Naive thymus-derived CD4-positive, alpha-beta T cell (primary cell): ENCODE measurements at regions of chr10 and their contacts with region 1.

Region 1: GRCh38 chr10:97445722-97446639 is at the starts of genes EXOSC1 and ZDHHC16:
- DNase-seq: peak; percentile 67 to 93 (median 89)
- ATAC-seq: peak; percentile 99
- H3K4me3 ChIP-seq: peak within 1 kb of the TSS; percentile 98
- H3K4me3 Mint-ChIP-seq: peak within 1 kb of the TSS; percentile 89 to 99 (median 98)
- H3K27ac ChIP-seq: peak within 1 kb of the TSS; percentile 80
- H3K27ac Mint-ChIP-seq: peak within 1 kb of the TSS; percentile 86 to 97 (median 93)
- H3K4me1 ChIP-seq: peaks cover 19 to 29% of the 10 kb centered on the region in 2 donors
- H3K4me1 Mint-ChIP-seq: peaks cover 32 to 69% (median 44%) of the 10 kb centered on the region in 7 donors
- H3K27me3 ChIP-seq: no peaks in the 10 kb centered on the region
- H3K27me3 Mint-ChIP-seq: no peaks in the 10 kb centered on the region
- total RNA-seq, gene EXOSC1: 32.6 to 65.4 (median 53.2) TPM
- total RNA-seq, gene ZDHHC16: 13.2 to 38.8 (median 26.8) TPM

Region 2: DNA sequence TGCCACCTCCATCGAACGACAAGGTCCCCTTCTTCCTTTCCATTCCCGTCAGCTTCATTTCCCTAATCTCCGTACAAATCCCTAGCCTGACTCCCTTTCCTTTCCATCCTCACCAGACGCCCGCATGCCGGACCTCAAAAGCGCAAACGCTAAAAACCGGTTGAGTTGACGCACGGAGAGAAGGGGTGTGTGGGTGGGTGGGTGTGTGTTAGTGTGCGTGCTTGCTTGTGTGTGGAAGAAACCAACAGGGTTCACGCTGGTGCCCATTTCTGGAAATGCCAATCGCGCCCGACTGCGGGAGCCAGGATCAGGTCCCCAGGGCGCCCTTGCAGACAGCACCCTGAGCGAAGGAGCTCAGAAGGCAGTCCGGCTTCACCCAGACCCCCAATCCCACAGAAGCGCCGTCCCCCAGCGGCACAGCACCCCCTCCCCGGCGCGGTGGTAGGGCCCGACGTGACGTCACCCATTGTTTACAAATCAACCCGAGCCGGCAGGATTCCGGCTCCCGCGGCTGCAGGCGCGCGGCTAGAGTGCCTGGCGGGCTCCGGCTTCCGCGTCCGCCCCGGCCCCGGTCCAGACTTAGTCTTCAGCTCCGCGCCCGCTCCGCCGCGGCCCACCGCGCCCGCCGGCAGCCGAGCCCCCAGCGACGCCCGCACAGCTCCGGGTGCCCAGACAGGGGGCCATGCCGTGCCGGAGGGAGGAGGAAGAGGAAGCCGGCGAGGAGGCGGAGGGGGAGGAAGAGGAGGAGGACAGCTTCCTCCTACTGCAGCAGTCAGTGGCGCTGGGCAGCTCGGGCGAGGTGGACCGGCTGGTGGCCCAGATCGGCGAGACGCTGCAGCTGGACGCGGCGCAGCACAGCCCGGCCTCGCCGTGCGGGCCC is 127.0 kb before region 1 on chr10 and contains the start of gene FRAT1:
- CTCF ChIA-PET with region 1: no interaction called
- POLR2A ChIA-PET with region 1: no interaction called
- intact Hi-C with region 1: loop called (anchors 1 to 5 kb)
- DNase-seq: peak; percentile 87 to 99 (median 95)
- ATAC-seq: peak; percentile 87
- H3K4me3 ChIP-seq: peak within 1 kb of the TSS; percentile 92
- H3K4me3 Mint-ChIP-seq: peak within 1 kb of the TSS; percentile 92 to 99 (median 94)
- H3K27ac ChIP-seq: peak within 1 kb of the TSS; percentile 100
- H3K27ac Mint-ChIP-seq: peak within 1 kb of the TSS; percentile 99 to 100 (median 99)
- H3K4me1 ChIP-seq: peaks cover 12 to 18% of the 10 kb centered on the region in 2 donors
- H3K4me1 Mint-ChIP-seq: peaks cover 20 to 40% (median 29%) of the 10 kb centered on the region in 7 donors
- H3K27me3 ChIP-seq: no peaks in the 10 kb centered on the region
- H3K27me3 Mint-ChIP-seq: peaks cover 0 to 20% (median 0%) of the 10 kb centered on the region in 5 donors
- total RNA-seq, gene FRAT1: 5.3 to 41.0 (median 21.8) TPM

Region 3: GRCh38 chr10:97400665-97401454 is 45.1 kb before region 1 on chr10 and contains the start of gene RRP12:
- CTCF ChIA-PET with region 1: interaction called, 5 read pairs
- POLR2A ChIA-PET with region 1: interaction called, 8 read pairs
- intact Hi-C with region 1: loop called (anchors 1 kb)
- DNase-seq: peak; percentile 47 to 96 (median 92)
- ATAC-seq: peak; percentile 96
- H3K4me3 ChIP-seq: peak within 1 kb of the TSS; percentile 73
- H3K4me3 Mint-ChIP-seq: peak within 1 kb of the TSS; percentile 90 to 97 (median 95)
- H3K27ac ChIP-seq: peak within 1 kb of the TSS; percentile 90
- H3K27ac Mint-ChIP-seq: peak within 1 kb of the TSS; percentile 81 to 99 (median 98)
- H3K4me1 ChIP-seq: peaks cover 13 to 15% of the 10 kb centered on the region in 2 donors
- H3K4me1 Mint-ChIP-seq: peaks cover 6 to 22% (median 17%) of the 10 kb centered on the region in 7 donors
- H3K27me3 ChIP-seq: no peaks in the 10 kb centered on the region
- H3K27me3 Mint-ChIP-seq: no peaks in the 10 kb centered on the region
- total RNA-seq, gene RRP12: 22.0 to 197 (median 32.3) TPM

Region 4: DNA sequence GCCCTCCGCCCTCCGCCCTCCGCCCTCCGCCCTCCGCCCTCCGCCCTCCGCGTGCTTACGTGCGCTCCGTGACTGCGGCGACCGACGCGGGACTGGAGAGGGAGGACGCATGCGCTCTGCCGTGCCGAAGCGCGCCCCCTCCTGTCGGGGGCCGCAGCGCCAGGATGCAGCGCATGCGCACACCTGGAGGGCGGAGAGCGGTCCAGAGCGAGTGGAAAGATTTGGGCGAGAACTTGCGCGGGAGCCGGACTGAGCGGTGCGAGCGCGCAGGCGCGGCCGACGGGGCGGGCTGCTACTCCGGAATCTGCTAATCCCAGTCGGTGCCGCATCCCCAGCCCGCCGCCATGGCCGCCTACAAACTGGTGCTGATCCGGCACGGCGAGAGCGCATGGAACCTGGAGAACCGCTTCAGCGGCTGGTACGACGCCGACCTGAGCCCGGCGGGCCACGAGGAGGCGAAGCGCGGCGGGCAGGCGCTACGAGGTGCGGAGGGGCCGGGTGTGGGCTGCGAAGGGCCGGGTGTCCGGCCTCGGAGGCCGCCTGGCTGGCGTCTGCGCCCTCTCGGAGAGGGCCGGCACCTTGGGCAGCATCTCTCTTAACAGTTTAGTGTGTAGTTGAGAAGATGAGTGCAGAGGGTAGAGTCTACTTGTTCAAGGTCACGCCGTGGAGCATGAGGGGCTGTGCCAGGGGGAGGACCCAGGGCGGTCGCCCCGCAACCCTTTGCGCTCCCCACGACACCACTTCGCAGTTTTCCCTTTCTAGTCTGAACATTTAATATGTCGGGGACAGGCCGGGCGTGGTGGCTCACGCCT is 19.8 kb before region 1 on chr10 and contains the start of gene PGAM1:
- CTCF ChIA-PET with region 1: interaction called, 3 read pairs
- POLR2A ChIA-PET with region 1: interaction called, 4 read pairs
- intact Hi-C with region 1: loop called (anchors 1 kb)
- DNase-seq: peak; percentile 93 to 98 (median 97)
- ATAC-seq: peak; percentile 91
- H3K4me3 ChIP-seq: peak within 1 kb of the TSS; percentile 92
- H3K4me3 Mint-ChIP-seq: peak within 1 kb of the TSS; percentile 83 to 97 (median 95)
- H3K27ac ChIP-seq: peak within 1 kb of the TSS; percentile 87
- H3K27ac Mint-ChIP-seq: peak within 1 kb of the TSS; percentile 77 to 99 (median 95)
- H3K4me1 ChIP-seq: peaks cover 20 to 29% of the 10 kb centered on the region in 2 donors
- H3K4me1 Mint-ChIP-seq: peaks cover 10 to 53% (median 34%) of the 10 kb centered on the region in 7 donors
- H3K27me3 ChIP-seq: no peaks in the 10 kb centered on the region
- H3K27me3 Mint-ChIP-seq: peaks cover 0 to 2% (median 0%) of the 10 kb centered on the region in 5 donors
- total RNA-seq, gene PGAM1: 58.5 to 536 (median 69.8) TPM

Region 5: GRCh38 chr10:97553575-97554031 is 107.6 kb after region 1 on chr10:
- CTCF ChIA-PET with region 1: interaction called, 3 read pairs
- POLR2A ChIA-PET with region 1: no interaction called
- intact Hi-C with region 1: loop called in 1 of 2 experiments (anchors 5 kb)
- DNase-seq: peak in 7 of 9 donors; percentile 27 to 60 (median 52)
- ATAC-seq: peak; percentile 64
- H3K4me3 ChIP-seq: no peak overlapping the region
- H3K4me3 Mint-ChIP-seq: no peak overlapping the region
- H3K27ac ChIP-seq: no peak overlapping the region
- H3K27ac Mint-ChIP-seq: no peak overlapping the region
- H3K4me1 ChIP-seq: no peaks in the 10 kb centered on the region
- H3K4me1 Mint-ChIP-seq: peaks cover 0 to 2% (median 0%) of the 10 kb centered on the region in 7 donors
- H3K27me3 ChIP-seq: no peaks in the 10 kb centered on the region
- H3K27me3 Mint-ChIP-seq: no peaks in the 10 kb centered on the region

Region 6: DNA sequence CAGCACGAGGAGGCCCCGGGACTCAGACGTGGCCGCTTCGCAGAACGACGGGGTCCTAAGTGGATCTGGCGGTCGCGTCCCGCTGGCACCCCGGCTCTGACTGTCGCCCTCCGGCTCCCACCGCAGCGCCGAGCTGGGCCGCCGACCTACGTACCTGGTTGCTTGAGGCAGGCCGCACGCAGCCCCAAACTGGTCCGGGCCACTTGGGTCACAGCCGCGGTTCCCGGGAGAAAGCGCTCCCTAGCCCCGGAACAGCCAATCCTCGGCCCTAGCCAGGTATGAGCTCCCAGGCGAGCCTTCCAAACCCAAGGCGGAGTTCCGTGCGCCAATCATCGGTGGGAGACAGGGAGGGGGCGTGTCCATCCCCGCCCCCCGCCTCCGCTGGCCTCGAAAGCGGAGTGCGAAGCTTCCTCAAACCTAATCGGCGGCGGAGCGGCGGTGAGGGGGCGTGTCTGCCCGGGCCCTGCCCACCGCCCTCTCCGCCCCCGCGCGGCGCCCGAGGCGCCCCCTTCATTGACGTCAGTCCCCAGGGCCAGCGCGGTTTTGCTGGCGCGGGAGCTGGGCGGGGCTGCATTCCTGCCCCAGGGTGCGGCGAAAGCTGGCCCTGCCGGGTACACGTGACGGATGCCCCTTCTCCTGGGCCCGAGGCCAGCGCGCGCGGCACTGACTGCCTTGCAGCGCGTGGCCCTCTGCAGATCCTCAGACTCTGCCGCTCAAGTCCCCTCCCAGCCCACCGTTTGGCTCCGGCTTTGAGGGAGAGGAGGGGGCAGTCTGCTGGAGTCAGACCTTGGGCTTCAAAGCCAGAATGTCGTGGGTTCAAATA is 241.2 kb after region 1 on chr10 and contains the start of gene AVPI1:
- CTCF ChIA-PET with region 1: no interaction called
- POLR2A ChIA-PET with region 1: no interaction called
- intact Hi-C with region 1: loop called in 1 of 2 experiments (anchors 1 kb)
- DNase-seq: peak; percentile 94 to 97 (median 96)
- ATAC-seq: peak; percentile 97
- H3K4me3 ChIP-seq: peak within 1 kb of the TSS; percentile 80
- H3K4me3 Mint-ChIP-seq: peak within 1 kb of the TSS; percentile 85 to 90 (median 88)
- H3K27ac ChIP-seq: peak within 1 kb of the TSS; percentile 81
- H3K27ac Mint-ChIP-seq: peak within 1 kb of the TSS; percentile 28 to 96 (median 91)
- H3K4me1 ChIP-seq: peaks cover 5 to 25% of the 10 kb centered on the region in 2 donors
- H3K4me1 Mint-ChIP-seq: peaks cover 9 to 30% (median 19%) of the 10 kb centered on the region in 7 donors
- H3K27me3 ChIP-seq: no peaks in the 10 kb centered on the region
- H3K27me3 Mint-ChIP-seq: peaks cover 0 to 2% (median 0%) of the 10 kb centered on the region in 5 donors
- total RNA-seq, gene AVPI1: 0.65 to 10.6 (median 2.5) TPM